Mammary epithelial cell (primary cell): ENCODE measurements at regions of chr1 and their contacts with region 1.

Region 1: DNA sequence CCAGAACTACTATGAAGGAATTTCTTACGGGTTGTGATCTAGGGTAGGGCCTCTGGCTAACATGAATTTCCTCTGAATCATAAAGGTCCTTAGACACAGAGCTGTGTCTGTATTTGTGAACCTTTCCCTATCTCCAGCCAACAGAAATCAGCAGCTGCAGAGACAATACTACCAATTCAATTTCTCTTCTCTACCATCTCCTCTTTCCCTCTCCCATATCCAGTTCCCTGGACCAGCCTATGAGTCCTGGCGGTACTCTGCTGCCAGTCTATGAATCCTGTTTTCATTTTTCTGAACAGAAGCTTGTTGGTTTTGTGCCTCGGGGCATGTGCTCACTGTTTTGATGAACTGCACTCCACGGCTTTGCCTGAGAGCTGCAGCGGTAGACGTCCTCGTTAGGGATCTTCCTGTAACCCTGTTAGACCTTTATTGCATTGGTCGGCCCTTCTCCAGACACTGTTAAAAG is 458.0 kb upstream of the VAMP3 start:
- DNase-seq: peak; percentile 43
- H3K4me3 ChIP-seq: no peak overlapping the region
- H3K27ac ChIP-seq: no peak overlapping the region
- H3K4me1 ChIP-seq: no peaks in the 10 kb centered on the region
- H3K27me3 ChIP-seq: no peaks in the 10 kb centered on the region
- CTCF ChIP-seq: no peak

Region 2: GRCh38 chr1:7389906-7390603 is 76.9 kb after region 1 on chr1:
- CTCF ChIA-PET with region 1: no interaction called
- dilution Hi-C with region 1: loop called (anchors 10 kb)
- in situ Hi-C with region 1: no loop called
- intact Hi-C with region 1: no loop called
- DNase-seq: no peak
- H3K4me3 ChIP-seq: no peak overlapping the region
- H3K27ac ChIP-seq: no peak overlapping the region
- H3K4me1 ChIP-seq: no peaks in the 10 kb centered on the region
- H3K27me3 ChIP-seq: no peaks in the 10 kb centered on the region
- CTCF ChIP-seq: no peak